CD4-positive, alpha-beta T cell (primary cell): ENCODE measurements at regions of chr1 and their contacts with region 1.

Region 1: GRCh38 chr1:47432071-47433036 is 5.5 kb upstream of the FOXD2 start:
- DNase-seq: peak in 13 of 14 experiments; percentile 42 to 81 (median 54)
- ATAC-seq: peak; percentile 51
- H3K4me3 ChIP-seq: peak overlapping the region; percentile 38
- H3K4me3 Mint-ChIP-seq: peak overlapping the region; percentile 84
- H3K27ac ChIP-seq: no peak overlapping the region
- H3K27ac Mint-ChIP-seq: no peak overlapping the region
- H3K4me1 ChIP-seq: peaks cover 45% of the 10 kb centered on the region
- H3K4me1 Mint-ChIP-seq: peaks cover 45% of the 10 kb centered on the region
- H3K27me3 ChIP-seq: peaks cover 24 to 34% of the 10 kb centered on the region in 2 experiments
- H3K27me3 Mint-ChIP-seq: peaks cover 75% of the 10 kb centered on the region
- CTCF ChIP-seq: peak; percentile 69

Region 2: DNA sequence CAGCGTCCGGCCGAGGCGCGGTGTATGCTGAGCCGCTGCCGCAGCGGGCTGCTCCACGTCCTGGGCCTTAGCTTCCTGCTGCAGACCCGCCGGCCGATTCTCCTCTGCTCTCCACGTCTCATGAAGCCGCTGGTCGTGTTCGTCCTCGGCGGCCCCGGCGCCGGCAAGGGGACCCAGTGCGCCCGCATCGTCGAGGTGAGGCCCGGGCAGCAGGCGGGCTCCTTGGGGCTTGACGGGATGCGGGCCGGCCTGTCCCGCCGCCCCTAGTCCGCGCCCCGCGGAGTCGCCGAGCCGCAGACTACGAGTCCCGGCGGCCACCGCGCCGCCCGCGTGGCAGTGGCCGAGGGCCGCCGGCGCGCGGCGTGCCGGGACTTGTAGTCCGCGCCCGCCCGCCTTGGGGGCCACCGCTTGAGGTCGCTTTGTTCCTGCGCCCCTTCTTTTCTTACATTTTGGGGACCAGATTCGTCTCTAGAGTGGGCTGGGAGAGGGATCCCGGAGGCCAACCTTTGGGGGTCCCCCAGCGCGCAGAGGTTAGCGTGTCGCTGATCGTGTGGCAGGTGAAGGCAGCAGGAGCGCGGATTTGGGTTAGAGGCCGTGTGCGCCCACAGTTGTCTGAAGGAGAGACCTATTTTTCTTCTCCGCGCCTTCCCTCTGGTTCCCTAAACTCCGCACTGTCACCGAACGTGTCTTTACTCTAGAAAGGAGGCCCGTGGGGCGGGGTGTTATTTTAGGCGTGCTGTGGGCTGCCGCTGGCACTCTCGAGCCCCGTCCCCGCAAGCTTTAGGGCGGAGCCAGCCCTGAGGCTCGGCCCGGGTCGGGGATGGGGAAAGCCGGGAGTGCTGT is 98.2 kb before region 1 on chr1:
- CTCF ChIA-PET with region 1: interaction called, 18 read pairs
- POLR2A ChIA-PET with region 1: no interaction called
- intact Hi-C with region 1: loop called in 1 of 2 experiments (anchors 5 kb)
- DNase-seq: peak; percentile 44 to 89 (median 59)
- ATAC-seq: peak; percentile 88
- H3K4me3 ChIP-seq: peak overlapping the region; percentile 82
- H3K4me3 Mint-ChIP-seq: peak overlapping the region; percentile 96
- H3K27ac ChIP-seq: peak overlapping the region; percentile 80 to 84
- H3K27ac Mint-ChIP-seq: peak overlapping the region; percentile 90
- H3K4me1 ChIP-seq: peaks cover 34% of the 10 kb centered on the region
- H3K4me1 Mint-ChIP-seq: peaks cover 21% of the 10 kb centered on the region
- H3K27me3 ChIP-seq: no peaks in the 10 kb centered on the region
- H3K27me3 Mint-ChIP-seq: no peaks in the 10 kb centered on the region
- CTCF ChIP-seq: no peak

Region 3: GRCh38 chr1:47478090-47478489 is 45.7 kb after region 1 on chr1:
- CTCF ChIA-PET with region 1: no interaction called
- POLR2A ChIA-PET with region 1: no interaction called
- intact Hi-C with region 1: no loop called
- DNase-seq: no peak
- ATAC-seq: no peak
- H3K4me3 ChIP-seq: no peak overlapping the region
- H3K4me3 Mint-ChIP-seq: no peak overlapping the region
- H3K27ac ChIP-seq: no peak overlapping the region
- H3K27ac Mint-ChIP-seq: no peak overlapping the region
- H3K4me1 ChIP-seq: no peaks in the 10 kb centered on the region
- H3K4me1 Mint-ChIP-seq: no peaks in the 10 kb centered on the region
- H3K27me3 ChIP-seq: peaks cover 4 to 5% of the 10 kb centered on the region in 2 experiments
- H3K27me3 Mint-ChIP-seq: peaks cover 31% of the 10 kb centered on the region
- CTCF ChIP-seq: no peak

Region 4: GRCh38 chr1:47725992-47726855 is 293.9 kb after region 1 on chr1:
- CTCF ChIA-PET with region 1: interaction called, 9 read pairs
- POLR2A ChIA-PET with region 1: interaction called, 4 read pairs
- intact Hi-C with region 1: loop called (anchors 2 to 5 kb)
- DNase-seq: peak; percentile 37 to 72 (median 50)
- ATAC-seq: peak; percentile 83
- H3K4me3 ChIP-seq: no peak overlapping the region
- H3K4me3 Mint-ChIP-seq: peak overlapping the region; percentile 54
- H3K27ac ChIP-seq: no peak overlapping the region
- H3K27ac Mint-ChIP-seq: no peak overlapping the region
- H3K4me1 ChIP-seq: peaks cover 7% of the 10 kb centered on the region
- H3K4me1 Mint-ChIP-seq: peaks cover 10% of the 10 kb centered on the region
- H3K27me3 ChIP-seq: peaks cover 20 to 52% of the 10 kb centered on the region in 2 experiments
- H3K27me3 Mint-ChIP-seq: peaks cover 71% of the 10 kb centered on the region
- CTCF ChIP-seq: peak; percentile 70